Activated T-helper 2 cell treated with anti-CD3 and anti-CD28 coated beads, Interferon-gamma antibody, Interleukin-2, Interleukin-4, amounts not matched to agents 10 μg/mL and 5 μg/mL and 100 μg/mL, durations not matched to agents 14 hours and 24 hours and 36 hours (primary cell): ENCODE measurements at regions of chr11 and their contacts with region 1.

Region 1: GRCh38 chr11:133927690-133928627 is 28.8 kb downstream of the IGSF9B start:
- DNase-seq: peak; percentile 62
- H3K4me3 Mint-ChIP-seq: peak overlapping the region; percentile 67
- H3K27ac Mint-ChIP-seq: peak overlapping the region; percentile 98
- H3K4me1 Mint-ChIP-seq: peaks cover 32% of the 10 kb centered on the region
- H3K27me3 Mint-ChIP-seq: no peaks in the 10 kb centered on the region

Region 2: GRCh38 chr11:133843454-133843987 is 84.4 kb before region 1 on chr11:
- intact Hi-C with region 1: no loop called
- DNase-seq: no peak
- H3K4me3 Mint-ChIP-seq: no peak overlapping the region
- H3K27ac Mint-ChIP-seq: no peak overlapping the region
- H3K4me1 Mint-ChIP-seq: no peaks in the 10 kb centered on the region
- H3K27me3 Mint-ChIP-seq: peaks cover 7% of the 10 kb centered on the region

Region 3: DNA sequence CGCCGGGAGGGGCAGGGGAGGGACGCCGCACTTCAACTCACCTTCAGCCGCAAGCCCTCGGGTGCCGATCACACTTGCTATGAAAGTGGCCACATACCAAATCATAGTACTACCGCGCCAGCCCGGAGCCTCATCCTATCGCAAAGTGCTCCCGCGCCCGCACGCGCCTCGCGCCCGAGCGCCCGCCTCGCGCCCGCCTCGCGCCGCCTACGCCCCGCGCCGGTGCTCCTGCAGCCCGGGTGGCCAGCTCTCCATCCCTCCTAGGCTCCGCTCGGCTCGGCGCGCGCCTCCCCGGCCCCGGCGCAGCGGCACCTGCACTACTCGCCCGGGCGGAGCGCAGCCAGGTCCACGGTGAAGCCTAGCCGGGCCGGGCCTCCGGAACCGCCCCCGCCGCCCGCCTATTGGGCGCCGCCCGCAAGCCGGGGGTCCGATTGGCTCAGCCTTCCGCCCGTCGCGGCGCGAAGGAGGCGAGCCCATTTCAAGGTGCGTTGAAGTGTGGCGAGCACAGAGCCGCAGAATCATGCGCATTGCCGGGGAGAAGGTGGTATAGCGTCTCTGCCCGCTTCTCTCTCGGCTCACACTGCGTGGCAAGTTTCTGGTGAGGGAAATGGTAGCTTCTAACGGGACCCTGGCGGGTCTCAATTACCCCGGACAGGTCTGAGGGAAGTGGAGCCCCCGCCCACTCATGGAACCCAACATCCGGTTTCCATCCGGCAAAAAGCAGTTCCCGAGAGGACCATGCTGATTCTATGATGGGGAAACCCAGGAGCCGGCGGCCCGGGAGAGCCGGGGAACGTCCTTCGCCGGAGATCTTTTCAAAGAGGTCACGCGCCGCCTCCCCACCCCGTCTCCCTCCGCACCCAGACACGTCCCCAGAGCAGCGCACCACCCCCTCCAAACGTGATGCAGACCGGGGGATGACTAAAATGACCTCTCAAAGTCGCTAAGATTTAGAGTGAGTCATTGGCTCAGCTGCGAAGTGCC is 29.0 kb after region 1 on chr11 and contains the start of gene IGSF9B:
- intact Hi-C with region 1: loop called (anchors 1 kb)
- DNase-seq: peak; percentile 90
- H3K4me3 Mint-ChIP-seq: peak within 1 kb of the TSS; percentile 83
- H3K27ac Mint-ChIP-seq: peak within 1 kb of the TSS; percentile 86
- H3K4me1 Mint-ChIP-seq: peaks cover 49% of the 10 kb centered on the region
- H3K27me3 Mint-ChIP-seq: peaks cover 10% of the 10 kb centered on the region
- total RNA-seq, gene IGSF9B: 101 and 110 TPM in 2 replicates

Region 4: DNA sequence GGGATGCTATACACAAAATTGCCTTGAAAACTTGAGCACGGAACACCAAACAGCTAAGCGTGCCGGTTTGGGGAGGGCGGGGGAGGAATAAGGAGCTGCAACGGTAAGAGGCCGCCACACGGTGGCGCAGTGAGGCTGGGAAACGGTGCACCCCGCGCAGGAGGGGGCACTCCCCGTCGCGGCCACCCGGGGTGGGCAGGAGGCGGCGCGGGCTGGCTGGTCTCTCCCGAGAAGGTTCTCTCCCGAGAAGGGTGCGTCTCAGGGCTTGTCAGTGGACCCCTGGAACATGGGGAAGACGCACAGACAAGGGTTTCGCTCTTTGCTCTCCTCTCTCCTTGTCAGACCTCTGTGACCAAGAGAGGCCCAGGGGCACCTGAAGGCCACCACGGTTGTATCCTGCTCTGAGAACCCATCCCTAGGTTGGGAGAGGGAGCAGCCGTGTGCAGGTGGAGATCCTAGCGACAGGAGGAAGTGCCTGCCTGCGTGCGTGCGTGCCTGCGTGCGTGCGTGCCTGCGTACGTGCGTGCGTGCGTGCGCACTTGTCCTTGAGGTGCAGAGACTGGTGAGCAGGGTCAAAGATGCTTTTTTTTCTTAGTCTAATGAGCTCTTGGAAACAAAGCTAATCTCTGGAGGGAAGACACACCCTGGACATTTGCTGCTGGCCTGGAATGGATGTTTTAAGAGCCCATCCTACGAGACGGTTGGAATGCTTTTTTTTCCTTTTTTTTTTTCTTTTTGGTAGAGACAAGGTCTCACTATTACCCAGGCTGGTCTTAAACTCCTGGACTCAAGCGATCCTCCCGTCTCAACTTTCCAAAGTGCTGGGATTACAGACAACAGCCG is 122.8 kb after region 1 on chr11:
- intact Hi-C with region 1: loop called (anchors 2 kb)
- DNase-seq: peak; percentile 66
- H3K4me3 Mint-ChIP-seq: no peak overlapping the region
- H3K27ac Mint-ChIP-seq: no peak overlapping the region
- H3K4me1 Mint-ChIP-seq: peaks cover 11% of the 10 kb centered on the region
- H3K27me3 Mint-ChIP-seq: peaks cover 18% of the 10 kb centered on the region

Region 5: DNA sequence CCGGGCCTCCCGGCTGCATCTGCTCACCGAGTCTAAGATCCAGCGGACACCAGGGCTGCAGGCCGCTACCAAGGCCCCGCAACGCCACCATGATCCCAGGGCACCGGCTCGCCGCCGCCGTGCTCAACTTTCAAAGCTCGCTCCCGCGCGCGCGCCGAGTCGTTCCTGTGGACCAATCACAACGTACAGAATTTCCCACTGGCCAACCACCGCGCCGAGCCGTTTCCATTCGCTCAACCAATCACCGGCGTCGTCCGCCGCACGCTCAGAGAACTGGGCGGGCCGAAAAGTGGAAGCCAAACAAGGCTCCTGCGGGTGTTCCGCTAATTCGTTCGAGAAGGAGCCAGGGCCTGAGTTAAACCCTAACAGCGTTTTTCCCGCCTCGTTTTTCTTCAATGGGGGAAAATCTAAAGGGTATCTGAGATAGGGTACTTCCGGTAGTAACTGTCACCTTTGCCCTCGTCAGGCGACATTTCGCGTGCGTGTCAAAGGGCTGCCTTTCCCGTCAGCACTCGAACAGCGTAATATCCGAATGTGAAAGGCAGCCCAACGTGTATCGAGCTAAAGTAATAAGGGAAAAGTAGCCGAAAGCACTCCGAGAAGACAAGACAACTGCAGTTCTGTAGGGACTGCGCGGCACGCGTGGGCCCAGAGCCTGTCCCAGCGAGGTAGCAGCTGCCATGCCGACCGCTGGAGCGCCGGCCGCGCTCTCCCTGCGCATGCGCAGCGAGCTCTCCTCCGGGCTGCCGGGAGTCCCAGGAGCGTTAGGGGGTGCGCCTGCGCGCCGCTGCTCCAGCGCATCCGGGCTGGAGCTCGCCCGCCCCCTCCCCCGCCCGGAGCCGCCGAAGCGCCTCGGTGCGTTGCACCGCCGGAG is 296.1 kb after region 1 on chr11 and contains the starts of genes NCAPD3 and VPS26B:
- intact Hi-C with region 1: loop called (anchors 5 kb)
- DNase-seq: peak; percentile 96
- H3K4me3 Mint-ChIP-seq: peak within 1 kb of the TSS; percentile 97
- H3K27ac Mint-ChIP-seq: peak within 1 kb of the TSS; percentile 98
- H3K4me1 Mint-ChIP-seq: peaks cover 59% of the 10 kb centered on the region
- H3K27me3 Mint-ChIP-seq: no peaks in the 10 kb centered on the region
- total RNA-seq, gene NCAPD3: 98.2 and 99.9 TPM in 2 replicates
- total RNA-seq, gene VPS26B: 41.7 and 43.8 TPM in 2 replicates

Region 6: DNA sequence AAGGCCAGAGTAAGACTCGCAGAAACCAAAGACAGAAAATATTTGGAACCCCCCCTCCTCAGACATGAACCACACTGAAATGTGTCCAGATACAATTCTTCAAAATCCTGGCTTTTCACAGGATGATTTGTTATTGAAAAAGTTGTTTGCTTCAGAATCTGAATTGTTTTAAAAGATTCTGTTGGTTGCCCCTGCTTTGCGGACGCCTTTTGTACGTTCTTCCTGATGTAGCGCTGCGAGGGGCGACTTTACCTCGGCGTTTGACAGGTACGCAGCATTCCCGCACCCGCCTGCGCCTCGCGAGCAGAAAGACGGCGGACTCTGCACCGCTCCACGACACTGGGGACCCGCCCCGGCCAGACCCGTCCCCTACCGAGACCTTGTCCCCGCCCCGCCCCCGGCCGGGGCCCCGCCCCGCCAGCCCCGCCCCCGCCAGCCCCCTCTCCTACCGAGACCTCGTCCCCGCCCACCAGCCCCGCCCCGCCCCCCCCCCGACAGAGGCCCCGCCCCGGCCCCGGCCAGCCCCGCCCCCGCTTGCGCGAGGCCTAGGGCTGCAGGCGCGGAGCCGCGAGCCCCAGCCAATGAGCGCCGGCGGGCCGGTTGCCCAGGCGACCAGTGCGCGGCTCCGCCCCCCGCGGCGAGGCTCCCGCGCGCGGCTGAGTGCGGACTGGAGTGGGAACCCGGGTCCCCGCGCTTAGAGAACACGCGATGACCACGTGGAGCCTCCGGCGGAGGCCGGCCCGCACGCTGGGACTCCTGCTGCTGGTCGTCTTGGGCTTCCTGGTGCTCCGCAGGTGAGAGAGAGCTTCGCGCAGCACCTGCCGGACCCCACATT is 403.6 kb after region 1 on chr11 and contains the start of gene GLB1L2:
- intact Hi-C with region 1: loop called (anchors 5 kb)
- DNase-seq: peak; percentile 78
- H3K4me3 Mint-ChIP-seq: peak within 1 kb of the TSS; percentile 77
- H3K27ac Mint-ChIP-seq: no peak within 1 kb of the TSS
- H3K4me1 Mint-ChIP-seq: peaks cover 9% of the 10 kb centered on the region
- H3K27me3 Mint-ChIP-seq: peaks cover 50% of the 10 kb centered on the region
- total RNA-seq, gene GLB1L2: 3.1 and 4.3 TPM in 2 replicates